ENCODE measurements at regions of chr7 and their contacts with region 1.

Region 1: GRCh38 chr7:25908154-25908949 is 243.6 kb upstream of the NFE2L3 start:
- DNase-seq: no peak
- H3K4me3 ChIP-seq: no peak overlapping the region
- H3K27ac ChIP-seq: no peak overlapping the region
- H3K4me1 ChIP-seq: no peaks in the 10 kb centered on the region
- H3K27me3 ChIP-seq: peaks cover 85% of the 10 kb centered on the region
- CTCF ChIP-seq: no peak

Region 2: GRCh38 chr7:25877802-25878789 is 30.3 kb before region 1 on chr7:
- intact Hi-C with region 1: no loop called
- DNase-seq: no peak
- H3K4me3 ChIP-seq: no peak overlapping the region
- H3K27ac ChIP-seq: no peak overlapping the region
- H3K4me1 ChIP-seq: no peaks in the 10 kb centered on the region
- H3K27me3 ChIP-seq: peaks cover 99% of the 10 kb centered on the region
- CTCF ChIP-seq: no peak

Region 3: GRCh38 chr7:26667500-26668133 is 759.3 kb after region 1 on chr7:
- intact Hi-C with region 1: loop called (anchors 10 kb)
- DNase-seq: no peak
- H3K4me3 ChIP-seq: no peak overlapping the region
- H3K27ac ChIP-seq: no peak overlapping the region
- H3K4me1 ChIP-seq: no peaks in the 10 kb centered on the region
- H3K27me3 ChIP-seq: peaks cover 51% of the 10 kb centered on the region
- CTCF ChIP-seq: peak; percentile 77